ENCODE measurements at regions of chr1 and their contacts with region 1.

Region 1: GRCh38 chr1:3530926-3531818 is 76.7 kb downstream of the ARHGEF16 start:
- DNase-seq: peak; percentile 54
- H3K4me3 ChIP-seq: peak overlapping the region; percentile 50 to 89 (median 77)
- H3K27ac ChIP-seq: peak overlapping the region; percentile 12
- H3K4me1 ChIP-seq: peaks cover 11% of the 10 kb centered on the region
- H3K27me3 ChIP-seq: no peaks in the 10 kb centered on the region
- CTCF ChIP-seq: no peak
- POLR2A ChIP-seq: peak; percentile 85

Region 2: DNA sequence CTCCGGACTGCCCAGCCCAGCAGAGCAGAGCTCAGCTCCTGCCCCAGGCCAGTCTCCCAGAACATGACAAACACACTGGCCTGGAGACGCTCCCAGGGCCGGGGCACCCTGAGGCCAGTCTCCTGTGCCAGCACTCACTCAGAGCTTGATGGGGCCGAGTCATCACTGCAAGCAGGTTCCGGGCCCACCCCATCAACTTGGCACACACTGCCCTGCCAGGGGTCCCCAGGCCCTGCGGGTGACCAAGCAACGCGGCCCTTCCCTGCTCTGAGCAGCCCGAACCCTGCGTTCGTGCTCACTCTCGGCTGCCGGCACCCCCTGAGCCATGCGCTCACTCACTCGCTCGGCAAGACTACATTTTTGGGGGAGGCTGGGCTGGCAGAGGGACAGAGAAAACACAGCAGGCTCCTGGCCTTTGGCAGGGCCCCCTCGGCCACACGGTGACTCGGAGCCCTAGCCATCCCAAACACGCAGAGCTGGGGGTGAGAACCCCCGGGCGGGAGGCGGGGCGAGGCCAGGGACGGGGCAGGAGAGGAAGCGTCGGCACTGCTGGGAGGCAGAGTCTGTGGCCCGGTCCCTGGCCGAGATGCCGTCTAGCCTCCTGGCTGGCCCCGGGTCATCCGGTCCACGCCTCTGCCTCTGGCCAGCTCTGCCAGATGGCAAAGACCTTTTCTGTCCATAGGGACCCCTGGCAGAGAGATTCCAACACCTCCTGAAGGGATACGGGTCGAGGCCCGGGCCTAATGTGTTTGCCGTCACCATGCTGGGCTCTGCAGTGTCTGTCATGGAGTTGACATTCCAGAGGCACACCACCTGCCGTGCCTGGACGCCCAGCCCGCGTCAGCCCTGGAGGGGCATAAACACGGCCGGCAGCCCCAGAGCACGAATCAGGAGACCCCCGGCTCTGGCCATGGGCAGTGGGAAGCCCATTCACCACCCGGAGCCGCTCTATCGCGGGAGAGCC is 12.2 kb after region 1 on chr1:
- CTCF ChIA-PET with region 1: no interaction called
- POLR2A ChIA-PET with region 1: no interaction called
- dilution Hi-C with region 1: no loop called
- intact Hi-C with region 1: loop called (anchors 1 kb)
- DNase-seq: peak; percentile 29
- H3K4me3 ChIP-seq: no peak overlapping the region
- H3K27ac ChIP-seq: no peak overlapping the region
- H3K4me1 ChIP-seq: peaks cover 17% of the 10 kb centered on the region
- H3K27me3 ChIP-seq: no peaks in the 10 kb centered on the region
- CTCF ChIP-seq: no peak
- POLR2A ChIP-seq: no peak

Region 3: GRCh38 chr1:3564921-3565827 is 34.0 kb after region 1 on chr1:
- CTCF ChIA-PET with region 1: no interaction called
- POLR2A ChIA-PET with region 1: no interaction called
- dilution Hi-C with region 1: no loop called
- intact Hi-C with region 1: no loop called
- DNase-seq: peak; percentile 26
- H3K4me3 ChIP-seq: no peak overlapping the region
- H3K27ac ChIP-seq: no peak overlapping the region
- H3K4me1 ChIP-seq: no peaks in the 10 kb centered on the region
- H3K27me3 ChIP-seq: no peaks in the 10 kb centered on the region
- CTCF ChIP-seq: peak; percentile 89 to 90
- POLR2A ChIP-seq: no peak

Region 4: DNA sequence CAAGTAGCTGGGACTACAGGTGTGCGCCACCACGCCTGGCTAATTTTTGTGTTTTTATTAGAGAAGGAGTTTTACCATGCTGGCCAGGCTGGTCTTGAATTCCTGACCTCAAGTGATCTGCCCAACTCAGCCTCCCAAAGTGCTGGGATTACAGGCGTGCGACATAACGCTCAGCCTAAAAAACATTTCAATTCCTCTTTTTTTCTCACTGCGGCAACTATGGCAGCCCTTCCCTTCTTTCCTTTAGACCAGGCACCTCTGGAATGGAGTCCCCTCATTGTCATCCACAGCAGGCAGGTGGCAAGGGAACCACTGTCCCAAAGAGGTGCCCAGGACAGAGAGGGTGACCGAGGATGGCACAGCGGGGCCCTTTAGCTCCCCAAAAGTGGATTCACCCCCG is 311.7 kb after region 1 on chr1:
- CTCF ChIA-PET with region 1: no interaction called
- POLR2A ChIA-PET with region 1: no interaction called
- dilution Hi-C with region 1: no loop called
- intact Hi-C with region 1: no loop called
- DNase-seq: no peak
- H3K4me3 ChIP-seq: no peak overlapping the region
- H3K27ac ChIP-seq: no peak overlapping the region
- H3K4me1 ChIP-seq: no peaks in the 10 kb centered on the region
- H3K27me3 ChIP-seq: no peaks in the 10 kb centered on the region
- CTCF ChIP-seq: no peak
- POLR2A ChIP-seq: no peak